ENCODE measurements at regions of chr15 and their contacts with region 1.

Region 1: DNA sequence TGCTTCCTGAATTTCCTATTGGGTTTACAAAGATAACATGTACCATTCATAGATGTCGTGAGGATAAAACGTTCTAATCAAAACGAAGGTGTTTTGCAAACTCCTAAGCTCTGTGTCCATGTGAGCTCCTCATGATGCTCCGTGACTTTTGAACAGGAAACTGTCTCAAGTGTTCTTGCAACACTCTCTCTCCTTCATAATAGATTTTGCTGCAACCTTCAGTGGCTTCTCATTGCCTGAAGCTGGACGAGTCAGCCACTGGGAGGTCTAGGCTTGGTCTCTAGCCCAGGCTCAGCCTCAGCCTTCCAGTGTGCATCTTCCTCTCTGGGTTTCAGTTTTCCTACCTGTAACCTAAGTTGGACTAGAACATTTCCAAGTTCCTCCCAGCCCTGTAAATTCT is 18.7 kb upstream of the BCL2A1 start:
- DNase-seq: peak; percentile 31
- H3K4me3 ChIP-seq: no peak overlapping the region
- H3K27ac ChIP-seq: no peak overlapping the region
- H3K4me1 ChIP-seq: peaks cover 4% of the 10 kb centered on the region
- H3K27me3 ChIP-seq: no peaks in the 10 kb centered on the region
- CTCF ChIP-seq: no peak

Region 2: GRCh38 chr15:79380755-79381497 is 608.8 kb before region 1 on chr15:
- CTCF ChIA-PET with region 1: no interaction called
- dilution Hi-C with region 1: no loop called
- in situ Hi-C with region 1: no loop called
- intact Hi-C with region 1: loop called (anchors 1 kb)
- DNase-seq: peak; percentile 42
- H3K4me3 ChIP-seq: no peak overlapping the region
- H3K27ac ChIP-seq: no peak overlapping the region
- H3K4me1 ChIP-seq: no peaks in the 10 kb centered on the region
- H3K27me3 ChIP-seq: no peaks in the 10 kb centered on the region
- CTCF ChIP-seq: peak; percentile 88 to 95

Region 3: DNA sequence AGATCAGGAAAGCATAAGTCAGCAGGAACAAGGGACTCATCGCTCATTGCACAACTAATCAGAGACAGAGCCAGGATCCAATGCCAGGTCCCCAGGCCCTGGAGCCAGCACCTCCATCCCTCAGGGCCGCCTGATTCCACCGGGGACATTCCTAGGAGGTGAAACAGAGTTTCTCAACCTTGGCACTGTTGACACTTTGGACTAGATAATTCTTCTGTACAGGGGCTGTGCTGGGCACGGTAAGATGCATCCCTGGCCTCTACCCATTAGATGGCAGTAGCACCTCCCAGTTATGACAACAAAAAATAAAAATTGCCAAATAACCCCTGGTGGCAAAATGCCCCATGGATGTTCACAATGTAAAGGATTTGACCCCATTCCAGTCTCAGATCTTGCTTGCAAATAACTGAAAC is 220.6 kb before region 1 on chr15:
- CTCF ChIA-PET with region 1: no interaction called
- dilution Hi-C with region 1: no loop called
- in situ Hi-C with region 1: no loop called
- intact Hi-C with region 1: loop called (anchors 1 kb)
- DNase-seq: peak; percentile 26
- H3K4me3 ChIP-seq: no peak overlapping the region
- H3K27ac ChIP-seq: no peak overlapping the region
- H3K4me1 ChIP-seq: no peaks in the 10 kb centered on the region
- H3K27me3 ChIP-seq: no peaks in the 10 kb centered on the region
- CTCF ChIP-seq: peak; percentile 36 to 65

Region 4: GRCh38 chr15:79896637-79897379 is 92.9 kb before region 1 on chr15 and contains the start of gene MTHFS:
- CTCF ChIA-PET with region 1: no interaction called
- dilution Hi-C with region 1: no loop called
- in situ Hi-C with region 1: loop called in 1 of 2 experiments (anchors 10 kb)
- intact Hi-C with region 1: loop called (anchors 1 kb)
- DNase-seq: peak; percentile 80
- H3K4me3 ChIP-seq: peak within 1 kb of the TSS; percentile 51 to 73 (median 59)
- H3K27ac ChIP-seq: peak within 1 kb of the TSS; percentile 76
- H3K4me1 ChIP-seq: peaks cover 12% of the 10 kb centered on the region
- H3K27me3 ChIP-seq: no peaks in the 10 kb centered on the region
- CTCF ChIP-seq: peak; percentile 21 to 64
- total RNA-seq, gene MTHFS: 21.7 to 32.8 TPM

Region 5: DNA sequence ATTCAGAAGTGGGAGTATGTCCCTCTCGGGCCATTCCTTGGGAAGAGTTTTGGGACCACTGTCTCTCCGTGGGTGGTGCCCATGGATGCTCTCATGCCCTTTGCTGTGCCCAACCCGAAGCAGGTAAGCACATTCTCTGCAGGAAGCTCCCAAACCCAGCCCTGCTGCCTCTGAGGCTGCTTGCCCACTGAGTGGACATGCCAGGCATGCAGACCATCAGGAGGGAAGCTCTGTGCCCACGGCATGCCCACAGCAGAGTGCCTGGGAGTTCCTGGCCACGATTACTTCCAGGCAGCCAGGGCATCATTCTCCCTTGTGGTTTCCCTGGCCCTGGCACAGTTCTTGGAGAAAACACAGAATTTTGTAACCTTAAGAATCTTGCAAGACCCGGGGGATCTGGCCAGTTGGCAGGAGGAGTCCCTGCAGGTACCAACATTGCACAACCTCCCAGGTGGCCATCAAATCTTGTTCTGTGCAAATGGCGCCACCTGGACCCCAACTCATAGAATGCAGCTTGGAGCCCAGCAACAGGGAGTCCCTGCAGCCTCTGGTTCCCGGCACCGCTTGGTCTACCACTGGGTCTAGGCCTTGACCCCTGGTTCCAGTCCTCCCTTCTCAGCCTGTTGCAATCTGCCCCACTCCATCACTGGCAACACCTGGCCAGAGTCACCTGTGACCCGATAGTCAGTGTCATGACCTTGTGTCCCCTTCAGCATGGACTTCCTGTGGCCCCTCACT is 183.5 kb after region 1 on chr15:
- CTCF ChIA-PET with region 1: no interaction called
- dilution Hi-C with region 1: no loop called
- in situ Hi-C with region 1: no loop called
- intact Hi-C with region 1: loop called (anchors 1 kb)
- DNase-seq: peak; percentile 65
- H3K4me3 ChIP-seq: no peak overlapping the region
- H3K27ac ChIP-seq: no peak overlapping the region
- H3K4me1 ChIP-seq: peaks cover 18% of the 10 kb centered on the region
- H3K27me3 ChIP-seq: no peaks in the 10 kb centered on the region
- CTCF ChIP-seq: peak; percentile 56 to 88

Measured in mammary epithelial cell (primary cell).